ENCODE measurements at regions of chr9 and their contacts with region 1.

Region 1: GRCh38 chr9:8660383-8660782 is 860.8 kb upstream of the DMAC1 start:
- DNase-seq: peak; percentile 46
- H3K4me3 ChIP-seq: no peak overlapping the region
- H3K27ac ChIP-seq: no peak overlapping the region
- H3K4me1 ChIP-seq: no peaks in the 10 kb centered on the region
- H3K27me3 ChIP-seq: no peaks in the 10 kb centered on the region
- CTCF ChIP-seq: no peak

Region 2: GRCh38 chr9:8718121-8718725 is 57.8 kb after region 1 on chr9:
- intact Hi-C with region 1: loop called (anchors 10 kb)
- DNase-seq: no peak
- H3K4me3 ChIP-seq: no peak overlapping the region
- H3K27ac ChIP-seq: no peak overlapping the region
- H3K4me1 ChIP-seq: no peaks in the 10 kb centered on the region
- H3K27me3 ChIP-seq: no peaks in the 10 kb centered on the region
- CTCF ChIP-seq: no peak